ENCODE measurements at regions of chr13 and their contacts with region 1.

Region 1: GRCh38 chr13:20188667-20189553 is 3.8 kb downstream of the GJB2 start:
- DNase-seq: peak in 1 of 2 donors; percentile 62
- ATAC-seq: no peak
- H3K4me3 ChIP-seq: no peak overlapping the region
- H3K27ac ChIP-seq: no peak overlapping the region
- H3K4me1 ChIP-seq: no peaks in the 10 kb centered on the region
- H3K27me3 ChIP-seq: peaks cover 0 to 2% of the 10 kb centered on the region in 2 donors

Region 2: DNA sequence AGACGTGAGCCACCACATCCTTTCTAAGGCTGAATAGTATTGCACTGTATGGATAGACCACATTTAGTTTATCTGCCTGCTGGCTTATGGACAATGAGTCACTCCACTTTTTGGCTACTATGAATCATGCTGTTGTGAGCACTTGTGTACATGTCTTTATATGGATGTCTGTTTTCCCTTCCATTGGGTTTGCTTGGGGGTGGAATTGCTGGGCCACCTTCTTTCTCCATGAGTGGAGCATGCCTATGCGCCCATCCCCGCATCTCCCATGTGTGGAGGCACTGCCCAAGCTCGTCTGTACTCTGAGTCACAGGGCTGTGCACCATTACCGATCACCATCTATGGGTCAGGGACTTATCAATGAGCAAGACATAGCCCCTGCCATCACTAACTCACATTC is 170.4 kb after region 1 on chr13:
- intact Hi-C with region 1: no loop called
- DNase-seq: no peak
- ATAC-seq: no peak
- H3K4me3 ChIP-seq: no peak overlapping the region
- H3K27ac ChIP-seq: no peak overlapping the region
- H3K4me1 ChIP-seq: no peaks in the 10 kb centered on the region
- H3K27me3 ChIP-seq: no peaks in the 10 kb centered on the region

Region 3: GRCh38 chr13:20647758-20648157 is 458.8 kb after region 1 on chr13:
- intact Hi-C with region 1: no loop called
- DNase-seq: no peak
- ATAC-seq: no peak
- H3K4me3 ChIP-seq: no peak overlapping the region
- H3K27ac ChIP-seq: no peak overlapping the region
- H3K4me1 ChIP-seq: no peaks in the 10 kb centered on the region
- H3K27me3 ChIP-seq: no peaks in the 10 kb centered on the region

Region 4: GRCh38 chr13:20911037-20911436 is 722.1 kb after region 1 on chr13:
- intact Hi-C with region 1: loop called in 1 of 2 experiments (anchors 5 kb)
- DNase-seq: no peak
- ATAC-seq: no peak
- H3K4me3 ChIP-seq: no peak overlapping the region
- H3K27ac ChIP-seq: no peak overlapping the region
- H3K4me1 ChIP-seq: no peaks in the 10 kb centered on the region
- H3K27me3 ChIP-seq: no peaks in the 10 kb centered on the region